Endothelial cell of umbilical vein (primary cell): ENCODE measurements at regions of chr12 and their contacts with region 1.

Region 1: DNA sequence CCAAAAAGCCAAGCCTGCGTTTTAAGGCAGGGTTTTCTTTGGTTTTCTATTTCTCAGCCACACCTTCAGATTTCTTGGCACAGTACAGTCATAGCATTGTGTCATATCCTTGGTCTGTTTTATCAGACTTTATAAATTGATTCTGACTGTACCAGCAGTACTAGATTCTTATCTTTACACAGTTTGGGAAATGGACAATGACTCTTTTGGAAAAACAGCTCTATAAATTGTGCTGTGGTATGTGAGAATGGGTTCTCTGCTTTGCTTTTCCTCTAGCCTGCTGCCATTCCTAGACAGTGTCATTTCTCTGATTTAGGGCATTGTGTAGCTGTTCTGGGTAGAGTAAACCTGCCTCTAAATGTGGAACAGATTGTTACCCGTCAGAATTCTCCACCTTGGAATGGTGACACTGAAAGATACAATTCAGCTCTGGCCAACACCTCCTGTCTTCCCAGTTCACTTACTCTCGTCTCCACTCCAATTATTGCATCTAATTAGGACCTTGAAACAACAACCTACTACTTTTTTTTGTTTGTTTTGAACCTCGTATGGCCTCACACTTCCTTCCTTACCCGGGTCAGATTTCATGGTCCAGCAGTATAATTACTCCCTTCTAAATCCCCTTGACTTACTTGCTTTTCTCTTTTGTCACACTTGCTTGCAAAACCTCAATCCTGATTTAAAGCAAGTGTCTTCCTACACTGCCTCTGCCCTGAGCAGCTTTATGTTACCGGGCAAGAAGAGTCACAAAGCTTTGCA is 226.3 kb downstream of the ERC1 start:
- DNase-seq: peak; percentile 89
- H3K4me3 ChIP-seq: peak overlapping the region in 1 of 3 experiments; percentile 52
- H3K27ac ChIP-seq: peak overlapping the region; percentile 98
- H3K4me1 ChIP-seq: peaks cover 20% of the 10 kb centered on the region
- H3K27me3 ChIP-seq: no peaks in the 10 kb centered on the region
- CTCF ChIP-seq: no peak
- POLR2A ChIP-seq: peak; percentile 39

Region 2: DNA sequence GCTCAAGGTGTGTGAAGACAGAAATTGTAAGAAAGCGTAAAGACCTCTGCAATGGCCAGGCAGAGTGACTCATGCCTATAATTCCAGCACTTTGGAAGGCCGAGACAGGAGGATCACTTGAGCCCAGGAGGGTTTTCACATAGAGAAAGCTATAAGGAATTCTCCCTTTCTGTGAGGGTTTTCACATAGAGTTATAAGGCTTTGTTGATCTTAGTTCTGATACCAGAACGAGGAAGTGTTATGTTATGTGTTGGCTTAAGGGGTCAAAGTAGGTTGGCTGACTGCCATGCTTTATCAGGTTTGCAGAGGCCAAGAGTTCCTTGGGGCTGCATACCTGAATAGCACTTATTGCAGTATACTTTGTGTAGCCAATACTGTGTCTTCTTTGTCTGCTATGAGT is 87.2 kb before region 1 on chr12:
- CTCF ChIA-PET with region 1: no interaction called
- POLR2A ChIA-PET with region 1: no interaction called
- dilution Hi-C with region 1: no loop called
- intact Hi-C with region 1: loop called (anchors 1 kb)
- DNase-seq: peak; percentile 72
- H3K4me3 ChIP-seq: no peak overlapping the region
- H3K27ac ChIP-seq: no peak overlapping the region
- H3K4me1 ChIP-seq: peaks cover 8% of the 10 kb centered on the region
- H3K27me3 ChIP-seq: no peaks in the 10 kb centered on the region
- CTCF ChIP-seq: no peak
- POLR2A ChIP-seq: no peak

Region 3: DNA sequence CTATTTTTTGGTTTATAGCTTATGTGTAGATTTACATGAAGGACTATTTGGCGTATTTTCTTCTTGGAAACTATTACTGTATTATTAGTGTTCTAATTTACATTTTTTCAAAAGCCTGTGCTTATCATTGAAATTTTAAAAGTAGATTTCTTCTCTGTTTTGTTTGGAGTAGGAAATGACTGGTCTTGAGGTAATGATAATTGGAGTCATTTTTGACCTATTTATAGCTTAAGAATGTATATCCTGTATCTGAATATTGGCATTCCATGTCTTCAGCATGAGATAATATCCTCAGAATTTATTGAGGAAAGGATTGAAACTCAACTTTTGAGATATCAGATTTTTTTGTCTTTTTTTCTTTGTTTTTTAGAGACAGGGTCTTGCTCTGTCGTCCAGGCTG is 33.0 kb before region 1 on chr12:
- CTCF ChIA-PET with region 1: interaction called, 4 read pairs
- POLR2A ChIA-PET with region 1: no interaction called
- dilution Hi-C with region 1: no loop called
- intact Hi-C with region 1: loop called (anchors 1 kb)
- DNase-seq: peak; percentile 61
- H3K4me3 ChIP-seq: no peak overlapping the region
- H3K27ac ChIP-seq: peak overlapping the region; percentile 74
- H3K4me1 ChIP-seq: peaks cover 21% of the 10 kb centered on the region
- H3K27me3 ChIP-seq: no peaks in the 10 kb centered on the region
- CTCF ChIP-seq: no peak
- POLR2A ChIP-seq: no peak

Region 4: GRCh38 chr12:1204581-1205121 is 12.7 kb before region 1 on chr12:
- CTCF ChIA-PET with region 1: interaction called, 6 read pairs
- POLR2A ChIA-PET with region 1: no interaction called
- dilution Hi-C with region 1: no loop called
- intact Hi-C with region 1: loop called (anchors 1 kb)
- DNase-seq: peak; percentile 74
- H3K4me3 ChIP-seq: peak overlapping the region; percentile 36 to 88 (median 77)
- H3K27ac ChIP-seq: peak overlapping the region; percentile 75
- H3K4me1 ChIP-seq: peaks cover 36% of the 10 kb centered on the region
- H3K27me3 ChIP-seq: no peaks in the 10 kb centered on the region
- CTCF ChIP-seq: no peak
- POLR2A ChIP-seq: no peak

Region 5: DNA sequence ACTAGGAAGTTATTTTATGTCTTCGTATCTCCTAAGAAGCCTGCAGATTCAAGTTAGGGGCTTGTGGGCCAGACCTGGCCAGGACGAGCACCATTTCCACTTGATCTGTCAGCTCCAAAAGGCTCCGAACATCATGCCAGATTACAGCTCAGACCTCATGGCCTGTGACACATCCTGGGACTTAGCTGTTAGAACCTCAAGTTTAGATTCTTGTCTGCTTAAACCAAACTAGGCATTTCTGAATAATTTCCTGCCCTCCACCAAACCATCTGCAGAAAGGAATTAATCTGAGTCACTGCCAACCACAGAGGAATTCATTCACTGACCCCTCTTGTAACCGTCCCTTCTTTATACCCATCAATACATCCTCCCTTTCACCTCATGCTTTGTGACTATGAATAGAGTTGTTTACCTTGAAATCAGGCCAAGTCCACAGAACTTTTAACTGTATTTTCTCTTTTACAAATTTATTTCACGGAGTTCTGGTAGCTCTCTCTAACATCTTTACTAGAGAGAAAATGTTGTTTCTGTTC is 256.7 kb after region 1 on chr12:
- CTCF ChIA-PET with region 1: no interaction called
- POLR2A ChIA-PET with region 1: no interaction called
- dilution Hi-C with region 1: no loop called
- intact Hi-C with region 1: loop called (anchors 1 kb)
- DNase-seq: peak; percentile 87
- H3K4me3 ChIP-seq: peak overlapping the region in 1 of 3 experiments; percentile 33
- H3K27ac ChIP-seq: peak overlapping the region; percentile 53
- H3K4me1 ChIP-seq: peaks cover 27% of the 10 kb centered on the region
- H3K27me3 ChIP-seq: peaks cover 9 to 32% of the 10 kb centered on the region in 2 experiments
- CTCF ChIP-seq: no peak
- POLR2A ChIP-seq: peak; percentile 52